WTC11 (cell line): ENCODE measurements at regions of chr11 and their contacts with region 1.

Region 1: GRCh38 chr11:45110562-45110961 is 35.9 kb upstream of the PRDM11 start:
- DNase-seq: no peak
- ATAC-seq: peak; percentile 78
- H3K4me3 Mint-ChIP-seq: no peak overlapping the region
- H3K27ac Mint-ChIP-seq: no peak overlapping the region
- H3K4me1 Mint-ChIP-seq: no peaks in the 10 kb centered on the region
- H3K27me3 Mint-ChIP-seq: peaks cover 17% of the 10 kb centered on the region
- CTCF ChIP-seq: peak; percentile 66

Region 2: GRCh38 chr11:44927174-44927661 is 183.3 kb before region 1 on chr11:
- CTCF ChIA-PET with region 1: interaction called, 221 read pairs
- POLR2A ChIA-PET with region 1: interaction called, 10 read pairs
- DNase-seq: peak; percentile 89
- ATAC-seq: peak; percentile 68
- H3K4me3 Mint-ChIP-seq: no peak overlapping the region
- H3K27ac Mint-ChIP-seq: no peak overlapping the region; the same call in 1 of the 2 replicates
- H3K4me1 Mint-ChIP-seq: peaks cover 28% of the 10 kb centered on the region
- H3K27me3 Mint-ChIP-seq: no peaks in the 10 kb centered on the region; the same call in 1 of the 2 replicates
- CTCF ChIP-seq: peak; percentile 86

Region 3: GRCh38 chr11:45089676-45090499 is 20.7 kb before region 1 on chr11:
- CTCF ChIA-PET with region 1: interaction called, 25 read pairs
- POLR2A ChIA-PET with region 1: no interaction called
- DNase-seq: peak; percentile 49
- ATAC-seq: peak; percentile 16
- H3K4me3 Mint-ChIP-seq: no peak overlapping the region
- H3K27ac Mint-ChIP-seq: no peak overlapping the region; the same call in 1 of the 2 replicates
- H3K4me1 Mint-ChIP-seq: peaks cover 84% of the 10 kb centered on the region
- H3K27me3 Mint-ChIP-seq: no peaks in the 10 kb centered on the region; the same call in none of the 2 replicates
- CTCF ChIP-seq: no peak

Region 4: DNA sequence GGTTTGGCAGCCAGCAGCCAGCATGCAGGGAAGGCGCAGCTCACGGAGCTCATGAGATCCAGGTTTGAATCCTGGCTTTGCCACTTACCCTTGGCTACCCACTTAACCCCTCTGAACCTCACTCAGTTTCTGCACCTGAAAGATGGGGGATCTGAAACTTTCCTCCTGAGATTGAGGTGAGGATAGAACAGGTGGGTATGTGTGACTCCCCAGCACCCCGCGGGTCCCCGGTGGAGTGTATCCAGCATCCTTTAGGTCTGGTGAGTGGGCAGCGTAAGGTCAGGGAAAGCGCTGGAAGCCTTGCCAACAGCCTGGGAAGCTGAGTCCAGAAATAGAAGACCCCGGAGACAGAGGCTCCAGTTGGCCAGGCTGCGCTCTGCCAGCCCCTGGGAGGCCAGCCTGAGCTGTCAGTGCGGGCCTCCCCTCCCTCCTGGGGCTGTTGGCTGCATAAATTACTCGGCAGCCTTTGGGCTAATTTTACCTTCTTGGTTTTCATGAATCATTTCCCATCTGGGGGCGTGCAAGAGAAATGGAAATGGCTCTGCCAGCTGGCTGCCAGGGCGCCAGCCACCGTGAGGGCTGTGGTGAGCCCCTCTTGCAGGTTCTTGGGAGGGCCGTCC is 53.5 kb after region 1 on chr11:
- CTCF ChIA-PET with region 1: interaction called, 20 read pairs
- POLR2A ChIA-PET with region 1: no interaction called
- DNase-seq: no peak
- ATAC-seq: no peak
- H3K4me3 Mint-ChIP-seq: no peak overlapping the region
- H3K27ac Mint-ChIP-seq: no peak overlapping the region
- H3K4me1 Mint-ChIP-seq: 0 out of 2 replicates have a peak, but pooled peaks cover 4% of the 10 kb centered on the region
- H3K27me3 Mint-ChIP-seq: no peaks in the 10 kb centered on the region
- CTCF ChIP-seq: no peak

Region 5: DNA sequence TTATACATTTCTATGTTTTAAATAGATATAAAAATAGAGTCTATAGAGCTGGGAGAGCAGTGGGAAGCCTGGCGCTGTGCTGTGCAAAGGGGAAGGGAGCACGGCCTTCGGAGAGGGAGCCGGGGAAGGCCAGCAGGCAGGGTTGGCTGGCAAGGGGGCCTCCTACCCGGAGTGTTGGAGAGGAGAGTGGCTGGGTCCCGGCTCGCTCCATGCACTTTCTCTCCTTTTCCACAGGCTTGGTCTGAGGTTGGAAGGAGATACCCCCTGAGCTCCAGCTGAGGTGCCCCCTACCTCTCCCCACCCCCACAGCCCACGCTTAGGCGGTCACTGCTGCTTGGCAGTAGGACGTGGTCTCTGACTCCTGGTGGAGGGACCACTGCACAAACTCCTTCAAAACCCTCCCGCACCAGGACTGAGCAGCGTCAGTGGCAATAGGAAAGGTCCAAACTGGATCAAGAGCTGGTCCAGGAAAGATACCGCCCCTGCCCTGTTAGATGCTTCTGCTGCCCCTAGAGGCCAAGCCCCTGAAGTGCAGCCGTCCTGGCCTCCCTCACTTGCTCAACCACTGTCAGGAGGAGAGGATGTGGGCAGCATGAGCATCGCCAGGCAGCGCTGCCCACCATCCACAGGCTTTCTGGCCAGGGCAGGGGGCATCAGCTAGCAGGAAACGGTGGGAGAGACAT is 122.7 kb after region 1 on chr11:
- CTCF ChIA-PET with region 1: interaction called, 39 read pairs
- POLR2A ChIA-PET with region 1: no interaction called
- DNase-seq: peak; percentile 93
- ATAC-seq: peak; percentile 94
- H3K4me3 Mint-ChIP-seq: no peak overlapping the region
- H3K27ac Mint-ChIP-seq: no peak overlapping the region
- H3K4me1 Mint-ChIP-seq: peaks cover 4% of the 10 kb centered on the region
- H3K27me3 Mint-ChIP-seq: peaks cover 12% of the 10 kb centered on the region
- CTCF ChIP-seq: peak; percentile 92

Region 6: DNA sequence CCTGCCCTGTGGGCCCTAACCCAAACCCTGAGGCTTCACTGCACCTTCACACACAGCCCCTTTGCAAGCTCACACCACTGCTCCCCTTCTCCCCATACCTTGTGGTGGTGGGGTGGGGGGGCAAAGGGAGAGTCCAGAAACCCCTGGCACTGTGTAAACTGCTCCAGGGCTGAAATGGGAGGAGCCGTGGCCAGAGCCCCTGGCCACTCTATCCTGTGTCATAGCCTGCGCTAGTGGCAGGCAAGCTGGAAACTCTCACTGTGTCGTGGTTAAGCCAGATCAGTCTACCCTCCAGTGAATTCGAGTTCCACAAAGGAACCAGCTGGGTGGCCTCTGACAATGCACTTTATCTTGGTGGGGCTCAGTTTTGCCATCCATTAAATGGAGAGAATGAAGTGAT is 183.9 kb after region 1 on chr11:
- CTCF ChIA-PET with region 1: interaction called, 24 read pairs
- POLR2A ChIA-PET with region 1: no interaction called
- DNase-seq: no peak
- ATAC-seq: no peak
- H3K4me3 Mint-ChIP-seq: no peak overlapping the region
- H3K27ac Mint-ChIP-seq: no peak overlapping the region
- H3K4me1 Mint-ChIP-seq: peaks cover 12% of the 10 kb centered on the region
- H3K27me3 Mint-ChIP-seq: peaks cover 87% of the 10 kb centered on the region
- CTCF ChIP-seq: no peak

Region 7: GRCh38 chr11:45423475-45424120 is 313.0 kb after region 1 on chr11:
- CTCF ChIA-PET with region 1: no interaction called
- POLR2A ChIA-PET with region 1: no interaction called
- DNase-seq: no peak
- ATAC-seq: no peak
- H3K4me3 Mint-ChIP-seq: no peak overlapping the region
- H3K27ac Mint-ChIP-seq: no peak overlapping the region
- H3K4me1 Mint-ChIP-seq: peaks cover 10% of the 10 kb centered on the region
- H3K27me3 Mint-ChIP-seq: peaks cover 4% of the 10 kb centered on the region
- CTCF ChIP-seq: no peak